HEK293T (cell line): ENCODE measurements at regions of chr16 and their contacts with region 1.

Region 1: GRCh38 chr16:30571695-30572600 is at the start of gene ZNF688:
- DNase-seq: peak; percentile 96

Region 2: DNA sequence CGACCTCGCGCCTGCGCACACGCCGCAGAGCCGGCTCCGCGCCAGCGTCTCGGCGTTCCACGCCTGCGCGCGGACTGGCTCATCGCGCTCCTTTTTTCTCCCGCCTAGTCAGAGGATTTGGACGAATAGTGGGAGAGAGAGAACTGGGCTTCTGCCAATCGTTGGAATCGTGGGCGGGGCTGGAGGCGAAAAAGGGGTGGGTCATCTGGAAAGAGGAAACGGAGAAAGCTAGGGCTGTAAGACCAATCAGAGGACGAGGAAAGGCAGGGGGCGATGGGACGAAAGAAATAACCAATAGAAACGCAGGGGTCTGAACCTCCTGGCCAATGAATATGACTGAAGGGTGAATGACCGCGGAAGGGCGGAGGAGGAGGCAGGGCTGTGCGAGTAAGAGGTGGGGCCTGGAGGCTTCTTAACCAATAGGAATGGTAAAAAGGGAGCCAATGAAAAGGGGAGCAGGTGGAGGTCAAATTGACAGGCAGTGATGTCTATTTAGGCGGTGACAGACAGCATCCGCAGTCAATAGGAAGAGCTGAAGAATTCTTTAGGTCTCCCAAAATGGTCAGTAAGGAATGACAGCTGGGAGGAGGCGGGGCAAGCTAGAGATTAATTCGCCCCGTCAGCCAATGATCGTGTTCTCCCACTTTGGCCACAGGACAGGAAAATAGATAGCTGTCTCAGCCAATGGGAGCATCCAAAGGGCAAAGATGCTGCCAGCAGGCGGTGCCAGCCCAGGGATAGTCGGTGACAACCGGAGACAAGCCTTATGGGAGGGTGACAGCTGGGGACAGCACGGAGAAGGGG is 201.3 kb before region 1 on chr16 and contains the start of gene TBC1D10B:
- CTCF ChIA-PET with region 1: no interaction called
- POLR2A ChIA-PET with region 1: no interaction called
- DNase-seq: peak; percentile 98

Region 3: DNA sequence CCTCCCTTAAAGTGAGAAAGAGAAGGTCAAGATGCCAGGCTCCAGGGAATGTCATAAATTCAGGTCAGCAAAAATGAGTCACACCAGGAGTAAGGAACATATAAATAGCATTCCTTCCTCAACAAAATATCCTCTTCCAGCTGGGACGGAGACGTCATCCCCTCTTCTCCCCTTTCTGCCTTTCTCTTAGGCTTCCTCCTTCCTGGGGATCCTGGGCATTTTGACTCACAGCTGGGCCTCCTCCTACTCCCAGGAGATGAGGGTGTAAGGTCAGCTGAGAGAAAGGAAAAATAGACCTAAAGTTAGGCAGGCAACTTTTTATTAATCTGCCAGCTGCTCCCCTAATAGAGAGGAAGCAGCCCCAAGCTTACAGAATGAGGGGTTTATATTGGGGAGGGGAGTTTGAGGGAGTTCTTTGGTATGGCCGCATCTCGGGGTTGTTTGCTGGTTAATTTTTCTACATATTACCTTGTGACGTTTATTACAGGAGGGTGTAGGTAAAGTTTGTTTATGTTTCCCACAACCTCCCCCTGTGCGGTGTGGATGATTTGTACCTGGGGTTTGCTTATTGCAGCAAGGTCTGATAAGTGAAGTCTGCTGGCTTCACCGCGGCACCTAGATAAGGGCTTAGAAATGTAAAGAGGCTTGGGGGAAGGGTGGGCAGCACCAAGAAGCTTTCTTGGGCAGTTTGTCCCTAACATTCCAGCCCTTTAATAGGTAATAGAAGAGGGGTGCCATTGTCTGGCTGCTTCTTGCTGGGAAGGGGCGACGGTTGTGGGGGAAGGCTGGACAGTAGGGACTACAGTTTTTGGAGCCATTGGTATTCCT is 30.2 kb before region 1 on chr16:
- CTCF ChIA-PET with region 1: no interaction called
- POLR2A ChIA-PET with region 1: interaction called, 49 read pairs
- DNase-seq: no peak

Region 4: GRCh38 chr16:30557957-30558788 is 13.8 kb before region 1 on chr16 and contains the start of gene ZNF764:
- CTCF ChIA-PET with region 1: interaction called, 5 read pairs
- POLR2A ChIA-PET with region 1: interaction called, 71 read pairs
- DNase-seq: peak; percentile 98

Region 5: GRCh38 chr16:30602616-30603277 is 30.8 kb after region 1 on chr16:
- CTCF ChIA-PET with region 1: interaction called, 3 read pairs
- POLR2A ChIA-PET with region 1: interaction called, 22 read pairs
- DNase-seq: no peak

Region 6: GRCh38 chr16:30637942-30638341 is 66.0 kb after region 1 on chr16:
- CTCF ChIA-PET with region 1: no interaction called
- POLR2A ChIA-PET with region 1: interaction called, 17 read pairs
- DNase-seq: peak; percentile 48

Region 7: GRCh38 chr16:31215287-31216162 is 643.6 kb after region 1 on chr16:
- CTCF ChIA-PET with region 1: no interaction called
- POLR2A ChIA-PET with region 1: no interaction called
- DNase-seq: peak; percentile 76